Activated CD8-positive, alpha-beta T cell treated with anti-CD3 and anti-CD28 coated beads, Interleukin-2, amount 10 ng/mL, durations not matched to agents 7 days and 5 days (primary cell): ENCODE measurements at regions of chr10 and their contacts with region 1.

Region 1: DNA sequence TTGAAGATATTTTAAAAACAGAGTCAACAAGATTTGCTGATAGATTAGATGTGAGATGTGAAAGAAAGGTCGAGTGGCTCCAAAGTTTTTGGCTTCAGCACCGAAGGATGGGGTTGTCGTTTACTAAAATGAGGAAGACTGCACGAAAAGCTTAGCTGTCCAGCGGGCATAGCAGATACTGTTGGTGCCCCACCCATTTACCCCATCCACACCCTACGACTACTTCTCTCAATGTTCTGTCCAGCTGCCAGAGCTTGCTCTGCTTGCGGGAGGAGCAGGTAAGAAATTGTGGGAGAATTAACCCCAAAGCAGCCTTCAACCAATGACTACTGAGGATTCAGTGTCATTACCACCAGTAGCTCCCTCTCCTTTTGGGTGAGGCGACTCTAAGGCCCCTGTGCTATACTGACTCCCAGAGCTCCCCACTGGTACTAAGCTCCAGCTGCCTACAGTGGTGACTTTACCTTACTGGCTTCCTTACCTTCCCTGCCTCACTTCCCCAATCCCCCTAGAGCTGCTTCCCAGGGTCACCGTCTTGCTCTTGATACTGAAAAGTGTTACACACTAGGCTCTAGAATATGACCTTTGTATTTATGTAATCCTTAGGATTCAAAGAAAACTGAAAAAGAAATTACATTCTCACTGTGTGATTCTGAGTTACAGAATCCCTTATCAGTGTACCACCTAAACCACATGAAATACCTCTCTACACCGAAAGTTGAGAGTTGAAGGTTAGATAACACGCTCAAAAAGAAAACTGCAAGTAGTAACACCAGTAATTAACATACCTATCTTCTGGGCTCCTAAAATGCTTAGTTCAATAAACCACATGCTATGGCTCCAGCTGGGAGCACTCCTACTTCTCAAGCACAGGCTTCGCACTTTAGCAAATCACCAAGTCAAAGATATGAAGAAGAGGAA is 22.3 kb downstream of the CACUL1 start:
- DNase-seq: no peak
- ATAC-seq: peak; percentile 86
- H3K4me3 Mint-ChIP-seq: peak overlapping the region; percentile 42
- H3K27ac Mint-ChIP-seq: peak overlapping the region; percentile 79
- H3K4me1 Mint-ChIP-seq: peaks cover 59% of the 10 kb centered on the region
- H3K27me3 Mint-ChIP-seq: no peaks in the 10 kb centered on the region

Region 2: GRCh38 chr10:118720685-118721538 is 11.6 kb before region 1 on chr10:
- CTCF ChIA-PET with region 1: interaction called, 30 read pairs
- POLR2A ChIA-PET with region 1: no interaction called
- DNase-seq: peak; percentile 80
- ATAC-seq: peak; percentile 51
- H3K4me3 Mint-ChIP-seq: no peak overlapping the region
- H3K27ac Mint-ChIP-seq: no peak overlapping the region
- H3K4me1 Mint-ChIP-seq: peaks cover 16% of the 10 kb centered on the region
- H3K27me3 Mint-ChIP-seq: no peaks in the 10 kb centered on the region

Region 3: DNA sequence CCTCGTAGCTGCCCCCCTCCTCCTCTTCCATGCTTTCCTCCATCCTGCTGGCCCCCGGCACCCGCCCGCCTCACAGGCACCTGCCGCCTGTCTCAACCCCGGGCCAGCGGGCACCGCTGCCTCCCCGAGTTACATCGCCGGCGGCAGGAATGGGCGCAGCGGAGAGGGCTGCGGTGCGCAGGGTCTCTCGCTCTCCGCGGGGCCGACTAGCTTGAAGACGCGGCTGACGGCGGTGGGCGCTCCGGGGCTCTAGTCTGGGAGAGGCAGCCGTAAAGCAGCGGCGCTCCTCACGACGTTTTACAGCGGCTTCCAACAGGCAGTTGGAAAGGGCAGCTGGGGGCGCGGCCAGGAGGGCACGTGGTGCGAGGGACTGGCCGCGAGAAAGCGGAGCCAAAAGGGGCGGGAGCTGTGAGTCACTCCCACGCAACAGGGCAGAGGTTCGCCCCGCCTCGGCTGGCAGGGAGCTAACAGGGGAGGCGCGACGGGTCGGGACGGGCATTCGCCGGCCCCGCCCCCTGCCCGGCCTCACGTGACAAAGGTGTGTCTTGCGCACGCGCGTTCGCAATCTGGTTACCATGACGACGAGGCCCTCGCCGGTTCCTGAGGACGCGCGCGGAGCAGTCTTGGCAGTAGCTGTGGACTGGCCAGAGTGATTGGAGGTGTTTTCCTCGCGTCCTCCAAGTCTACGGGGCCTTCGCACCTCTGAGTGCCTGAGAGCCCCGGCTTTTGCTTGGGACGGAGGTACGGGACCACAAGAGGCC is 22.4 kb after region 1 on chr10 and contains the start of gene CACUL1:
- CTCF ChIA-PET with region 1: interaction called, 35 read pairs
- POLR2A ChIA-PET with region 1: interaction called, 9 read pairs
- DNase-seq: peak; percentile 100
- ATAC-seq: peak; percentile 99
- H3K4me3 Mint-ChIP-seq: peak within 1 kb of the TSS; percentile 91
- H3K27ac Mint-ChIP-seq: peak within 1 kb of the TSS; percentile 87
- H3K4me1 Mint-ChIP-seq: peaks cover 21% of the 10 kb centered on the region
- H3K27me3 Mint-ChIP-seq: peaks cover 12% of the 10 kb centered on the region
- total RNA-seq, gene CACUL1: 25.5 to 30.2 TPM